Endothelial cell of umbilical vein (primary cell): ENCODE measurements at regions of chr2 and their contacts with region 1.

Region 1: DNA sequence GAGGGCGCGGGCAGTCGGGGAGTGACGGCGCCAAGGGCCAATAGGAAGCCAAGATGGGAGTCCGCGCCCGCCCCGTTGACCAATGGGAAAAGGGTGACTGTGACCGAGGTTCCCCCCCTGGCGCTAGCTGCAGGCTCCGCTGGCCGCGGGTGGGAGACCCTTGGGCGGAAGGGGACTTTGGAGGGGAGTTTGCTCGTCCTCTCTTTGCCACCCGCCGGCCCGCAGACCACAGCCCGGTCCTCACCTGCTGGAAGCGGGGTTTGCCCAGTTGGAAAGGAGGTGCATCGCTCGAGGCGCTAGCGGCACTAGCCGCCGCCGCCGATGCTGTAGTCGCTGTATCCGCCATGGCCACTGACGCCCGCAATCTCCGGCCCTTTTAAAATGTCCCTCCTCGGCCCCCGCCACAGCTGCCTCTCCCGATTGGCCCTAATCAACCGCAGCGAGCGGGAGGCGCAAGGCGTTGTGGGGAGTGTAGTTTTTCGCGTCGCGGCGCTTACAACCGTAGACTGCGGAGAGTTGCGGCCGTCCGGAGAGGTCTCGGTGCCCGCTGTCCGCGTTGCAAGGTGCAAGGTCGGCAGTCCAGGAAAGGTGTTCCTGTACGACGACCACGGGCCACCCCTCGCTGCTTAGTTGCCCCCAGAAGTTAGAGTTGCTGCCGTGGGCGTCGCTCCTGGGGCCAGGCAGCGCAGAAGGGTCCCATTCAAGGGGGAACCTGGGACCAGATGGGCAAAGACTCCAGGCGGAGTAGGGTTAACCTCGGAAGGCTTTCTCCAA is at the start of gene SFXN5:
- DNase-seq: peak; percentile 94
- H3K4me3 ChIP-seq: peak within 1 kb of the TSS; percentile 77 to 86 (median 80)
- H3K27ac ChIP-seq: peak within 1 kb of the TSS; percentile 75
- H3K4me1 ChIP-seq: peaks cover 12% of the 10 kb centered on the region
- H3K27me3 ChIP-seq: no peaks in the 10 kb centered on the region
- CTCF ChIP-seq: peak in 1 of 2 donors; percentile 23
- POLR2A ChIP-seq: peak; percentile 71
- total RNA-seq, gene SFXN5: 24.6 and 28.6 TPM in 2 replicates

Region 2: GRCh38 chr2:72993147-72993932 is 78.2 kb before region 1 on chr2:
- CTCF ChIA-PET with region 1: interaction called, 7 read pairs
- POLR2A ChIA-PET with region 1: no interaction called
- dilution Hi-C with region 1: no loop called
- intact Hi-C with region 1: loop called (anchors 1 kb)
- DNase-seq: peak; percentile 51
- H3K4me3 ChIP-seq: no peak overlapping the region
- H3K27ac ChIP-seq: no peak overlapping the region
- H3K4me1 ChIP-seq: no peaks in the 10 kb centered on the region
- H3K27me3 ChIP-seq: no peaks in the 10 kb centered on the region
- CTCF ChIP-seq: peak; percentile 57 to 70
- POLR2A ChIP-seq: no peak

Region 3: DNA sequence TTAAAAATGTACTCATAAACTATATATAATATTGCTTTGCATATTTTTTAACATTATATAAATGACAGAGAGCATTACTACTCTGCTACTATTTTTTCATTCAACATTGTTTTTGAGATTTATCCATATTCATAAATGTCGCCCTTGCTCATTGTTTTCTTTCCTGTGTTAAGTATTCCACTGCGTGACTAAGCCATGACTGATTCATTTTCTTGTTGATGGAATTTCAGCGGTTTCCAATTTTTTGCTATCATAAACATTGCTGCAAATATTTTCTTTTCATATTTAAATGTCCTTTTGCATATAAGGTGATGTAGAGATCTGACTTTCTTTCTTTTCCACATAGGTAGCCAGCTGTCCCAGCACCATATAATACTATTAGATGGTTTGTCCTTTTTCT is 57.6 kb before region 1 on chr2:
- CTCF ChIA-PET with region 1: no interaction called
- POLR2A ChIA-PET with region 1: no interaction called
- dilution Hi-C with region 1: no loop called
- intact Hi-C with region 1: loop called (anchors 2 kb)
- DNase-seq: peak; percentile 89
- H3K4me3 ChIP-seq: peak overlapping the region in 1 of 3 experiments; percentile 42
- H3K27ac ChIP-seq: peak overlapping the region; percentile 84
- H3K4me1 ChIP-seq: peaks cover 26% of the 10 kb centered on the region
- H3K27me3 ChIP-seq: no peaks in the 10 kb centered on the region
- CTCF ChIP-seq: no peak
- POLR2A ChIP-seq: no peak

Region 4: DNA sequence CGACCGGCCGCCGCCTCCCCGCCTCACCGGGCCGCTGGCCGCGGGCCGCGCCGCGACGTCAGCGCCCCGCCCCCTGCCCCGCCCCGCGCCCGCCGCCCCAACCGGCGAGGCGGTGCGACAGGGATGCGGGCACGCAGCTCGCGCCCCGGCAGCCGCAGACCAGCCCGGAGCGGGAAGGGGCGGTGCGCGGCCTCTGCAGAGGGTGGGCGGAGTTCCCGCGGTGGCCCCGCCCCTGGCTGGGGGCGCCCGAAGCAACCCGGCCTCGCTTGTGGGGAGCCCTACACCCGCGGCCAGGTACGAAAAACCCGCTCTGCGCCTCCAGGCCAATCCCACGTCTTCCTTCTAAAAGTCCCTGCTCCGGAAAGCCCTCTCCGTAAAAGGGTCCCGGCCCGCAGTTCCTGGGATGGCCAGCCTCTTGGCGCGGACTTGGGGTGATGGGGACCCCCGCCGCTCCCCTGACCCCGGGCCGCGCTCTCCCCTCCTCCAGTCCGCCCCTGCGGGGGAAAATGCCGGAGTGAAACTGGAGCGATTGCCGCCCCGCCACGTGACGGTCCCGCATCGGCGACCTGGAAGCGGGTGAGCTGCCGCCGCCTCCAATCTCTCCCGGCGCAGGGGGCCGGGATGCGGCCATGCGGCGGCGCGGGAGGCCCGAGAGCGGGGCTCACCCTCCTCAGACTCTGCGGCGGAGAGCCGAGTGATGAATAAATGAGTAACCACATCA is 41.5 kb after region 1 on chr2 and contains the start of gene RAB11FIP5:
- CTCF ChIA-PET with region 1: interaction called, 3 read pairs
- POLR2A ChIA-PET with region 1: no interaction called
- dilution Hi-C with region 1: no loop called
- intact Hi-C with region 1: loop called (anchors 1 kb)
- DNase-seq: peak; percentile 70
- H3K4me3 ChIP-seq: peak within 1 kb of the TSS; percentile 73 to 76 (median 74)
- H3K27ac ChIP-seq: peak within 1 kb of the TSS; percentile 60
- H3K4me1 ChIP-seq: peaks cover 16% of the 10 kb centered on the region
- H3K27me3 ChIP-seq: no peaks in the 10 kb centered on the region
- CTCF ChIP-seq: no peak
- POLR2A ChIP-seq: peak; percentile 55
- total RNA-seq, gene RAB11FIP5: 47.0 and 49.4 TPM in 2 replicates

Region 5: DNA sequence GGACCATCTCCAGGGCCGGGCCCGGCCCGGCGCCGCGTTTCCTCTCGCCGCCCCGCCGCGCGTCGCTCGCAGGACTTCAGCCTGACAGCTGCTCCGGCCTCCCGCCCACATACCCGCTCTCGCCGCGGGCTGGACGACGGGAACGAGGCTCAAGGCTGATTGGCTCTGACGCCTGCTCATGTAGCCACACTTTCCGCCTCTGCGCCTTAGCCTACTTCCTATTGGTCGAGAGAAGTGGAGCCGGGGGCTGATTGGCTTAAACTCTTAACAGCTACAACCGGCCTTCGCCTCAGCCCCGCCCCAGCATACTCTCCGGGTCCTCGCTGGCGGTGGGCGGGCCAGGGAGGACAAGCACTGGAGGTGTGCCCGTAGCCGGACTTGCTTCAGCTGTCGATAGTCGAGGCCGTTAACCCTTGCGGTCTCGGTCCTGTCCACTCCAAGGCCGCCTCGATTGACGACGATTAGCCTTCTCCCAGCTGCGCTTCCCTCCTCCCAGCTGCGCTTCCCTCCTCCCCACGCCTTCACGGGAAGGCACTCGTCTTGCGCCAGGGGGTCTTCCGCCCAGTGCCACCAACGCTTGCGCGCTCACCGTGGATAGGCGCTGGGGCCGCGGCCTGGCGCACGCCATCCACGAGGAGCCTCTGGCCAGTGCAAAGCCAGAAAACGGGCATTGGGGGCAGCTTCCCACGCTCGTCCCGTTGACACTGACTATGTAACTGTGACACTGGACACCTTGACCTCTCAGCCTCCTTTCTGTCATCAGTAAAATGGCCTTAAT is 161.8 kb after region 1 on chr2 and contains the start of gene PRADC1:
- CTCF ChIA-PET with region 1: no interaction called
- POLR2A ChIA-PET with region 1: no interaction called
- dilution Hi-C with region 1: no loop called
- intact Hi-C with region 1: loop called (anchors 1 kb)
- DNase-seq: peak; percentile 100
- H3K4me3 ChIP-seq: peak within 1 kb of the TSS; percentile 76 to 90 (median 85)
- H3K27ac ChIP-seq: peak within 1 kb of the TSS; percentile 84
- H3K4me1 ChIP-seq: peaks cover 21% of the 10 kb centered on the region
- H3K27me3 ChIP-seq: no peaks in the 10 kb centered on the region
- CTCF ChIP-seq: no peak
- POLR2A ChIP-seq: no peak
- total RNA-seq, gene PRADC1: 19.6 and 21.8 TPM in 2 replicates

Region 6: GRCh38 chr2:73297151-73297559 is 225.6 kb after region 1 on chr2:
- CTCF ChIA-PET with region 1: no interaction called
- POLR2A ChIA-PET with region 1: no interaction called
- dilution Hi-C with region 1: no loop called
- intact Hi-C with region 1: no loop called
- DNase-seq: no peak
- H3K4me3 ChIP-seq: no peak overlapping the region
- H3K27ac ChIP-seq: no peak overlapping the region
- H3K4me1 ChIP-seq: no peaks in the 10 kb centered on the region
- H3K27me3 ChIP-seq: peaks cover 42 to 54% of the 10 kb centered on the region in 2 experiments
- CTCF ChIP-seq: no peak
- POLR2A ChIP-seq: no peak